HepG2 (cell line): ENCODE measurements at regions of chrX and their contacts with region 1.

Region 1: DNA sequence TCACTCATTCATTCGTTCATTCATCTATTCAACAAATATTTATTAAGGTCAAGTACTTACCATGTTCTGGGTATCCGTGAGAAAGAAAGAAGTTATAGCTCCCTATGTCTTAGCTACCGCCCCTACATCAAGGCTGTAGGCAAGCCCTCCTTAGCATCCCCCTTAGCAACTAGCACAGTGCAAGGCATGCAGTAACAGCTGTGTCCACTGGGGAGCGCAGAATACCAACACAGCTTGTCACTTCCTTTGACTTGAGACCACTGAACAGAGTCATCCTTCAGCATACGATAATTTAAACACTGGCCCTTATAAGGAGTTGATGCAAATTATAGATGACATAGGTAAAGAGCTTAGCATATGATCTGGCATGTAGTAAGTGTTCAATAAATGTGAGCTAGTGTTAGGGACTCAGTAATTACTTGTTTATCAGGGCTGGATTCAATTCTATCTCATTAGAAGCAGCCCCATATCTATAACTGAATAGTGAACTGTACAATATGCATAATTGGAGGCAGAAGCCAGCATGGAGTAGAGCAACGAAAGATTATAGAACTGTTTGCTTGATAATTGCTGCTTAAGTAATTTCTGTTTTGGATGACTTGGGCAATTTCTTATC is 8.7 kb downstream of the KIAA1210 start:
- DNase-seq: peak; percentile 17
- ATAC-seq: peak; percentile 83
- H3K4me3 ChIP-seq: no peak overlapping the region
- H3K27ac ChIP-seq: no peak overlapping the region
- H3K4me1 ChIP-seq: no peaks in the 10 kb centered on the region
- H3K27me3 ChIP-seq: no peaks in the 10 kb centered on the region
- CTCF ChIP-seq: peak; percentile 73
- EP300 ChIP-seq: no peak
- POLR2A ChIP-seq: no peak
- RAD21 ChIP-seq: no peak

Region 2: DNA sequence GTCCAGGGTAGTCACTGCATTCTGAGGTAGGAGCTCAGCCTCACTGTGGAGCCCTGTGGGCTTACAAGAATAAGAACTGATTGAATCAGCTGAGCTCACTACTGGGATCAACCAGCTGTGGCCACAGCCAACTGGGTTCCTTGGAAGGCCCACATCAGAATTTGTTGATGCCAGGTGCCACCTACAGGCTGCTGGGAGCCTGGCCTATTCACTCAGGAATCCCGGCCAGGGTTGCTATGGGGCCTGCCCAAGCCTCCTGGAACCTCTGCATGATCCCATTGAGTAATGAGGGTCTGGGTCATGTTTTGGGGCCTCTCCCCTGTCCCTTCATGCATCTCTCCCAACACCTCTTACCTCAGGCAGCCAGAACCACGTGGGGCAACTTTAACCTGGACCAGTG is 62.6 kb after region 1 on chrX:
- CTCF ChIA-PET with region 1: no interaction called
- POLR2A ChIA-PET with region 1: no interaction called
- in situ Hi-C with region 1: no loop called
- intact Hi-C with region 1: loop called (anchors 1 kb)
- DNase-seq: peak; percentile 12
- ATAC-seq: peak; percentile 85
- H3K4me3 ChIP-seq: no peak overlapping the region
- H3K27ac ChIP-seq: no peak overlapping the region
- H3K4me1 ChIP-seq: peaks cover 2% of the 10 kb centered on the region; the same call in 1 of the 2 replicates
- H3K27me3 ChIP-seq: no peaks in the 10 kb centered on the region
- CTCF ChIP-seq: peak; percentile 32
- EP300 ChIP-seq: no peak
- POLR2A ChIP-seq: no peak
- RAD21 ChIP-seq: no peak

Region 3: GRCh38 chrX:119194621-119195020 is 75.7 kb after region 1 on chrX:
- CTCF ChIA-PET with region 1: no interaction called
- POLR2A ChIA-PET with region 1: no interaction called
- in situ Hi-C with region 1: no loop called
- intact Hi-C with region 1: loop called (anchors 2 kb)
- DNase-seq: no peak
- ATAC-seq: 0 out of 3 replicates have a peak, but pooled peaks have one; percentile 25
- H3K4me3 ChIP-seq: no peak overlapping the region
- H3K27ac ChIP-seq: no peak overlapping the region
- H3K4me1 ChIP-seq: no peaks in the 10 kb centered on the region
- H3K27me3 ChIP-seq: no peaks in the 10 kb centered on the region
- CTCF ChIP-seq: peak; percentile 32
- EP300 ChIP-seq: no peak
- POLR2A ChIP-seq: no peak
- RAD21 ChIP-seq: no peak

Region 4: GRCh38 chrX:119222932-119223331 is 104.0 kb after region 1 on chrX:
- CTCF ChIA-PET with region 1: interaction called, 5 read pairs
- POLR2A ChIA-PET with region 1: no interaction called
- in situ Hi-C with region 1: no loop called
- intact Hi-C with region 1: loop called (anchors 1 kb)
- DNase-seq: no peak
- ATAC-seq: no peak
- H3K4me3 ChIP-seq: no peak overlapping the region
- H3K27ac ChIP-seq: no peak overlapping the region
- H3K4me1 ChIP-seq: no peaks in the 10 kb centered on the region
- H3K27me3 ChIP-seq: no peaks in the 10 kb centered on the region
- CTCF ChIP-seq: no peak
- EP300 ChIP-seq: no peak
- POLR2A ChIP-seq: no peak
- RAD21 ChIP-seq: no peak